ENCODE measurements at regions of chr6 and their contacts with region 1.

Region 1: GRCh38 chr6:107977283-107977682 is 19.3 kb upstream of the SEC63 start:
- DNase-seq: peak; percentile 16
- H3K4me3 Mint-ChIP-seq: no peak overlapping the region
- H3K27ac Mint-ChIP-seq: no peak overlapping the region
- H3K4me1 Mint-ChIP-seq: peaks cover 22% of the 10 kb centered on the region
- H3K27me3 Mint-ChIP-seq: no peaks in the 10 kb centered on the region
- CTCF ChIP-seq: peak; percentile 52

Region 2: DNA sequence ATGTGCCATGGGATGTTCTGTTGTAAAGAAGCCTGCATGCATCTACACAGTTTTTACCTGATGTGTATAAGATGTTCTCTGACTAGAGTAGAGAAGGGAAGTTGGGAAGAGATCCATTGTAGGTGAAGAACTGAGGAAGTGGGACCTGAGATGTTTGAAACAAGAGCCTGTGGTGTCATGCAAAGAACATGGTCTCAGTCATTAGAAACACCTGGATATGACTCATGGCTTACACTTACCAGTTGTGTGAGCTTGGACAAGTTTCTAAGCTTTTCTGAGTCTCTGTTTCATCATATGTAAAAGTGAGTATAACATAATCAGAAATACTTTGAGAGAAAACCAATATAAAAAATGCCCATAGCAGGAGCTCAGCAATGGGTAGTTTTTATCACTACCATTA is 32.6 kb after region 1 on chr6:
- CTCF ChIA-PET with region 1: no interaction called
- intact Hi-C with region 1: no loop called
- DNase-seq: no peak
- H3K4me3 Mint-ChIP-seq: no peak overlapping the region
- H3K27ac Mint-ChIP-seq: no peak overlapping the region
- H3K4me1 Mint-ChIP-seq: no peaks in the 10 kb centered on the region
- H3K27me3 Mint-ChIP-seq: no peaks in the 10 kb centered on the region
- CTCF ChIP-seq: no peak

Region 3: GRCh38 chr6:108052706-108053105 is 75.4 kb after region 1 on chr6:
- CTCF ChIA-PET with region 1: interaction called, 21 read pairs
- intact Hi-C with region 1: loop called (anchors 1 kb)
- DNase-seq: no peak
- H3K4me3 Mint-ChIP-seq: no peak overlapping the region
- H3K27ac Mint-ChIP-seq: no peak overlapping the region
- H3K4me1 Mint-ChIP-seq: no peaks in the 10 kb centered on the region
- H3K27me3 Mint-ChIP-seq: no peaks in the 10 kb centered on the region
- CTCF ChIP-seq: no peak

Region 4: GRCh38 chr6:108097882-108098281 is 120.6 kb after region 1 on chr6:
- CTCF ChIA-PET with region 1: no interaction called
- intact Hi-C with region 1: no loop called
- DNase-seq: no peak
- H3K4me3 Mint-ChIP-seq: no peak overlapping the region
- H3K27ac Mint-ChIP-seq: no peak overlapping the region
- H3K4me1 Mint-ChIP-seq: no peaks in the 10 kb centered on the region
- H3K27me3 Mint-ChIP-seq: no peaks in the 10 kb centered on the region
- CTCF ChIP-seq: no peak

Region 5: DNA sequence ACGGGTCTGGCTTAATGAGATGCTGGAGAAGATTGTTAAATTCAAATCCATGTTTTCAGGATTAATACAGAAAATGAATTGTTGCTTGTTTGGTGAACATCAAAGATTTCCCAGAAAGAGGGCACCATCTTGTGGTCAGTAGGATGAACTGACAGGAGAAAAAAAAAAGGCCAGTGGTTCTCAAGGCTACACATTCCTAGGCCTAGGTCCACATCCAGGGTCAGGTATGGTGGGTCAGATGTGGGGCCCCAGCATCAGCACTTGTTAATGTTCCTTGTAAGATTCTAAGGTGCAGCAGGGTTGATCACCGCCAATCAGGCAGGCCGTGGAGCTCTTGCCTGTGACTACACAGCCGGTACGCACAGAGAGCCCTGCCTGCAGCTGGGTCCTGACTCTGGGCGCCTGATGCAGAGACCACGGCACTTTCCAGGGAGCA is 549.5 kb after region 1 on chr6:
- CTCF ChIA-PET with region 1: no interaction called
- intact Hi-C with region 1: loop called (anchors 2 kb)
- DNase-seq: no peak
- H3K4me3 Mint-ChIP-seq: no peak overlapping the region
- H3K27ac Mint-ChIP-seq: no peak overlapping the region
- H3K4me1 Mint-ChIP-seq: no peaks in the 10 kb centered on the region
- H3K27me3 Mint-ChIP-seq: no peaks in the 10 kb centered on the region
- CTCF ChIP-seq: peak; percentile 72